Left ventricle myocardium inferior (tissue), 1 donor: ENCODE measurements at regions of chr4 and their contacts with region 1.

Region 1: GRCh38 chr4:88706574-88706973 is 8.9 kb upstream of the NAP1L5 start:
- DNase-seq: no peak
- H3K4me3 ChIP-seq: no peak overlapping the region
- H3K27ac ChIP-seq: peak overlapping the region; percentile 57
- H3K4me1 ChIP-seq: peaks cover 15% of the 10 kb centered on the region
- H3K27me3 ChIP-seq: no peaks in the 10 kb centered on the region
- CTCF ChIP-seq: peak; percentile 75

Region 2: DNA sequence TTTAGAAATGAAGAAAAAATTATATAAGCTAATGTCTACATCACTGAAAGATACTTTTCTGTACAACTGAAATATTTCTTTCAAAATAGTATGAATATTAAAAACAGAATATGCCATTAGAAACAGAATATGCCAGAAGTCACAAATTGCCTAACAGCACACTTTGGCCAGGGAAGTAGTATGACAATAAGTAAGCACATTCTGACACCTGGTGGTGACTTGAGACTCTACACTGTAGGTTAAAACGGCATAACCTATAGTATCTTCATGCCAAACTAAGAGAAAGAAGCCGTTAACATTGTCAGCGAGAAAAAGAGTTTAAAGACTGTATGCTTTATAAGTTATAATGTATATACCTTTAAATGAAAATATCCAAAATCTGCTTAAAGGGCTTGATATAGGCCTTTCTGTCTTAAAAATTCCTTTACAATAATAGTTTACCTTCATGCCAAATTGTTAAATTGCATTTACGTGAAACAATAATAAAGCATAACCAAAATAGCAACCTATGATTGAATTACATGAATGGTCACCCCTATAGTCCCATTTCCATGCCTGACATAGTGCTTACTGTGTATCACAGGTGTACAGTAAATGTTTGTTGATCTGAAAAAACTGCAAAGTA is 317.6 kb after region 1 on chr4:
- intact Hi-C with region 1: loop called (anchors 5 kb)
- DNase-seq: no peak
- H3K4me3 ChIP-seq: no peak overlapping the region
- H3K27ac ChIP-seq: no peak overlapping the region
- H3K4me1 ChIP-seq: peaks cover 26% of the 10 kb centered on the region
- H3K27me3 ChIP-seq: no peaks in the 10 kb centered on the region
- CTCF ChIP-seq: peak; percentile 86